Ovary (tissue), 10 donors: ENCODE measurements at regions of chr18 and their contacts with region 1.

Region 1: DNA sequence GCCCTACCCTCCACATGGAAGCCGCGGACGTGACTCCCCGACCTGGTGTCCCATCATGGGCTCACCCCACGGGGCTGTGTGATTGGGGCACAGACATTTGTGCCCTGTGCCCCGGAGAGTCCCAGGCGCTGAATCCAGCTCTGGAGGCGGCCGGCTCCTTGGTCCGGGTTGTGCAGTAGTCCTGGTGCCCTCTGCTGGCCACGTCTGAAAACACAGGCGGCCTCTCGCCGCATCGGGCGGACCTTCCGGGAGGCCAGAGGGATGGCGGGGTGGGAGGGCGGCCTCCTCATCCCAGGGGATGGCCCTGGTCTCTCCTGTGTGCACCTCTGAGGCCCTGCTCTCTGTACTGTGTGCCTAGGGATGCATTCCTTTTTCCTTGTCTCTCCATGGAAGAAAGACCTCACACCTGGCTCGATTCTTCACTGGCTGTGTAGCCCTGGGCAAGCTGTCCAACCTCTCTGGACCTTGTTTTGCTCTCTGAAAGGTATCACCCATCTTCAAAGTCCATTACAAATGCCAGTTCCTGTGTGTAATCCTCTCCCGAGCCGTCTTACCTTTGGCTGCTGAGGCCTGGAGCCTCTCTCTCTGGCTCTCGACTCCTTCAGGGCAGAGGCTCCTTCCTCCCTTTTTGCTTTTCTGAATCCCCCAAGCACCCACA is 27.6 kb downstream of the CELF4 start:
- DNase-seq: peak; percentile 68 to 87 (median 79)
- H3K4me3 ChIP-seq: no peak overlapping the region
- H3K27ac ChIP-seq: no peak overlapping the region
- H3K4me1 ChIP-seq: no peaks in the 10 kb centered on the region
- H3K27me3 ChIP-seq: no peaks in the 10 kb centered on the region
- CTCF ChIP-seq: peak; percentile 62 to 85 (median 76)
- EP300 ChIP-seq: no peak
- POLR2A ChIP-seq: no peak

Region 2: GRCh38 chr18:37309055-37309454 is 228.9 kb before region 1 on chr18:
- intact Hi-C with region 1: no loop called
- DNase-seq: no peak
- H3K4me3 ChIP-seq: no peak overlapping the region
- H3K27ac ChIP-seq: no peak overlapping the region
- H3K4me1 ChIP-seq: no peaks in the 10 kb centered on the region
- H3K27me3 ChIP-seq: no peaks in the 10 kb centered on the region
- CTCF ChIP-seq: no peak
- EP300 ChIP-seq: no peak
- POLR2A ChIP-seq: no peak

Region 3: GRCh38 chr18:37341016-37341415 is 197.0 kb before region 1 on chr18:
- intact Hi-C with region 1: loop called in 3 of 4 experiments (anchors 5 to 10 kb)
- DNase-seq: no peak
- H3K4me3 ChIP-seq: no peak overlapping the region
- H3K27ac ChIP-seq: no peak overlapping the region
- H3K4me1 ChIP-seq: no peaks in the 10 kb centered on the region
- H3K27me3 ChIP-seq: no peaks in the 10 kb centered on the region
- CTCF ChIP-seq: no peak
- EP300 ChIP-seq: no peak
- POLR2A ChIP-seq: no peak

Region 4: DNA sequence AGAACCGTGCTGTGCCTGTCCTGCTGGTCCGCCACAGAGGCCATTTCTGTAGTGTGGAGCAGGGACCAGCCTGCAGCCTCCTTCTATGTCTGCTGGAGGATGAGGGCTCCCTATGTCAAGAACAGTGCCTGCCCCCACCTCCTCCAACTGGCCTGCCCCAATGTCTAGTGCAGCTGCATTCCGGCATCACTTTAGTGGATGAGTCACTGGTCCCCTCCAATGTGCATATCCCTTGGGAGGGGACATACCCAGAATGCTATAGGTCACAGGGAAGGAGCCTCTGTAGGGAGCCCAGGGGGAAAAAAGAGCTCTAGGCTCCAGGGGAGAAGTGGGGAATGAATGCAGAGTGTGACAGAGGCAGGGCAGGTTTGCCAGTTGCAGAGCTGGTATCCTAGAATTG is 191.9 kb before region 1 on chr18:
- intact Hi-C with region 1: loop called in 3 of 4 experiments (anchors 5 to 10 kb)
- DNase-seq: no peak
- H3K4me3 ChIP-seq: no peak overlapping the region
- H3K27ac ChIP-seq: no peak overlapping the region
- H3K4me1 ChIP-seq: no peaks in the 10 kb centered on the region
- H3K27me3 ChIP-seq: no peaks in the 10 kb centered on the region
- CTCF ChIP-seq: no peak
- EP300 ChIP-seq: no peak
- POLR2A ChIP-seq: no peak

Region 5: GRCh38 chr18:37440206-37440605 is 97.8 kb before region 1 on chr18:
- intact Hi-C with region 1: loop called in 2 of 4 experiments (anchors 5 kb)
- DNase-seq: peak in 2 of 5 donors; percentile 31 to 53
- H3K4me3 ChIP-seq: no peak overlapping the region
- H3K27ac ChIP-seq: no peak overlapping the region
- H3K4me1 ChIP-seq: peaks cover 5% of the 10 kb centered on the region
- H3K27me3 ChIP-seq: no peaks in the 10 kb centered on the region
- CTCF ChIP-seq: no peak
- EP300 ChIP-seq: no peak
- POLR2A ChIP-seq: no peak

Region 6: DNA sequence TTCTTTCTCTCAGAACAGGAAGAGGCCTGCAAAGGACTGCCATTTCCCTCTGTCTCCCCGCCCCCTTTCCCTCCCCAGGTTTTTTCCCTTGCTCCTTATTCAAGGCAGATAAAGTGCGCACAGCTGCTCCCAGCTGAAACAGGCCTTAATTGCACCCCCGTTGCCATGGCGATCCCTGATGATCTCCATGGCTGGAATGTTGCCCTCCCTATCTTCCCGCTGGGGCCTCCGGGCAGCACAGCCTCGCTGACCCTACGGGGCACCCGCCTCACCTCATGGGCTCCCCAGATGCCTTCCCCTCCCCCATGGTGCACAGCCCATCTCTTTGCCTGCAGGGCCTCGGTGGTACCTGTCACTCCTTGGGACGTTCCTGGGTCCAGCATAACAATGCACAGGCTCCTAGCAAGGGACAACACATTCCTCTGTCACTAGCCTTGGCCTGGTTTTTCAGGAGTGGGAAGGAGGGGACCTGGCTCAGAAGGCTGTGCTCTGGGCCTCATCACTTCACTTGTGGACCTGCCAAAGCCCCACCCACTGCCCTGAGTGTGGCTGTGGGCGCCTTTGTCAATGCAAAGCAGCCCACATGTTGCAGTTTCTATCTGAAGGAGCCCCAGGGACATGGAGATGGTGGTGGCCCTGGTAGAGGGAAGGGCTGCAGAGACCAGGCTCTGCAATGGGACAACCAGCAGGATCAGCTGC is 87.4 kb before region 1 on chr18:
- intact Hi-C with region 1: loop called in 1 of 4 experiments (anchors 2 kb)
- DNase-seq: peak; percentile 79 to 86 (median 85)
- H3K4me3 ChIP-seq: no peak overlapping the region
- H3K27ac ChIP-seq: peak overlapping the region in 1 of 2 donors; percentile 44
- H3K4me1 ChIP-seq: peaks cover 40% of the 10 kb centered on the region
- H3K27me3 ChIP-seq: no peaks in the 10 kb centered on the region
- CTCF ChIP-seq: no peak
- EP300 ChIP-seq: no peak
- POLR2A ChIP-seq: no peak

Region 7: GRCh38 chr18:37588289-37588688 is 50.3 kb after region 1 on chr18:
- intact Hi-C with region 1: no loop called
- DNase-seq: no peak
- H3K4me3 ChIP-seq: no peak overlapping the region
- H3K27ac ChIP-seq: no peak overlapping the region
- H3K4me1 ChIP-seq: no peaks in the 10 kb centered on the region
- H3K27me3 ChIP-seq: no peaks in the 10 kb centered on the region
- CTCF ChIP-seq: no peak
- EP300 ChIP-seq: no peak
- POLR2A ChIP-seq: no peak